WTC11 (cell line): ENCODE measurements at regions of chr6 and their contacts with region 1.

Region 1: DNA sequence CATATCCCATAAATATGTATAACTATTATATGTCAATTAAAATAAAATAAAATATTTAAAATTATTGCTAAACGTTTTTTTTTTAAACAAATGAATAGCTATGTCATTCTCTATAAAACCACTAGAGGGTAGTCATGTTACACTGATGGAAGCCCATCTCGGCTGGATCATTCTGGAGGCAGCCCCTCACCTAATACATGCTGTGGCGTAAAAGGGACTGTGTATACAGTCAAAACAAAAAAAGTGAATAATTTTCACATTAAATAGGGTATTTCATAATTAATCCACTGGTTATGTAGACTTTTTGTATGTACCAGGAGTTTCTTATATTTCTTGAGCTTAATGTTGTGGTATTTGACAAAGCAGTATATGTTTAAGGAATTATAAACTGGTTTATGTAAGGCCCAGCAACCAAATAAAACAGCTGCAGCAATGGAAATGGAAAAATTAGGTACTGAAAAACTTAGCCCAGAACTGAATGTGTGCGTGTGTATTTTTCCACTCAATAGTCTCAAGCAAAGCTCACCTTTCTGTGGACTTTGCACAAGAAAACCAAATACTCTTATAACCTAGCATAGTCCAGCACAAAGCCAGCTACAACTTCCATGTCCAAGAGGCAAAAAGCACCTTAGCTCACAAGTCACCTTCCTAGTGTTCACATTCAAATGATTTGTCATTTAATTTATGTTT is 81.7 kb downstream of the COL9A1 start:
- DNase-seq: no peak
- ATAC-seq: peak; percentile 83
- H3K4me3 Mint-ChIP-seq: no peak overlapping the region
- H3K27ac Mint-ChIP-seq: no peak overlapping the region
- H3K4me1 Mint-ChIP-seq: no peaks in the 10 kb centered on the region
- H3K27me3 Mint-ChIP-seq: no peaks in the 10 kb centered on the region
- CTCF ChIP-seq: peak; percentile 69

Region 2: DNA sequence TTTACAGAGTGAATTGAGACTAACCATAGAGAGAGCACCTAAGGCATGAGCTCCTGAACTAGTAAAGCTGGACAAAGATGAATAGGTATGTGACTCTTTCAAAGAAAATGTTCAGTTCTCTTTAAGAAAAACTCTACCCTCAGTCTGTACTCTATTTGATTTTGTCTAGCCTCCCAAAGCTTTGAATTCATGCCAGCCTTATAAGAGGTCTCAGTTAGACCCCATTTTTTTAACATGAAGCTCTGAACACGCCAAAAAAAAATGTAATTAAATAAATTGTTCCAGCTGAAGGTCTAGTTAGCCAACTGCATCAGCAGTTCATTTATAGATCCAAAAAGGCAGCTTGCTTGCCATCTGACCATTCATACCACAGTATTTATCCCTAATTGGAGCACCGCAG is 10.1 kb after region 1 on chr6:
- CTCF ChIA-PET with region 1: interaction called, 28 read pairs
- POLR2A ChIA-PET with region 1: interaction called, 3 read pairs
- DNase-seq: no peak
- ATAC-seq: no peak
- H3K4me3 Mint-ChIP-seq: no peak overlapping the region
- H3K27ac Mint-ChIP-seq: no peak overlapping the region
- H3K4me1 Mint-ChIP-seq: peaks cover 7% of the 10 kb centered on the region
- H3K27me3 Mint-ChIP-seq: no peaks in the 10 kb centered on the region
- CTCF ChIP-seq: no peak

Region 3: DNA sequence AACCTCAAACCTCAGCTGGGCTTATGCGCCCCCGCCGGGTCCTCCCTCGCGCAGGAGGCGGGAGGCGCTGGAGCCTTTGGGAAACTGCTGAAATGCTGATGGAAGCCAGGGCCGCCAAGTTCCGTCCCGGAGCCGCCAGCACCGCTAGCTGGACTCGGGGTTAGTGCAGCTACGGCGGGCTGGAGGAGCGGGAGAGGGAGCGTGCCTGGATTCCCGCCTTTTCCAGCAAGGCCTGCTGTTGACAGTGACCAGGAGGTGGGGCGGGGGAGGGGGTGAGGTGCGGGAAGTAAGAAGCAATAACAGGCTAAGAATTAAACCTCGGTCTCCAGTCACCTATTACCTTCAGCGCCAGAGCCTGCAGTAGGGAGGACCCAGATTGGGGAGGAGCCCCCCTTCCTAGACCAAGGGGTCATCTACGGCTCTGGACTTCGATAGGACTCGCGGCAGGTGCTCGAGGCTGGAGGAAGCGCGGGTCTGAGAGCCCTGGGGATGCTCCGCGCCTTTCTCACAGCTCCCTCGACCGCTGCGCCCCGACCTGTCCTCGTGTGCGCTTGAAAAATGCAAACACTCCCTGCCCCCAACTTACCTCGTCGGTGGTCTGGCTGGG is 61.2 kb after region 1 on chr6:
- CTCF ChIA-PET with region 1: interaction called, 35 read pairs
- POLR2A ChIA-PET with region 1: interaction called, 3 read pairs
- DNase-seq: peak; percentile 61
- ATAC-seq: peak; percentile 56
- H3K4me3 Mint-ChIP-seq: peak overlapping the region; percentile 78
- H3K27ac Mint-ChIP-seq: no peak overlapping the region
- H3K4me1 Mint-ChIP-seq: peaks cover 24% of the 10 kb centered on the region
- H3K27me3 Mint-ChIP-seq: peaks cover 58% of the 10 kb centered on the region
- CTCF ChIP-seq: no peak

Region 4: DNA sequence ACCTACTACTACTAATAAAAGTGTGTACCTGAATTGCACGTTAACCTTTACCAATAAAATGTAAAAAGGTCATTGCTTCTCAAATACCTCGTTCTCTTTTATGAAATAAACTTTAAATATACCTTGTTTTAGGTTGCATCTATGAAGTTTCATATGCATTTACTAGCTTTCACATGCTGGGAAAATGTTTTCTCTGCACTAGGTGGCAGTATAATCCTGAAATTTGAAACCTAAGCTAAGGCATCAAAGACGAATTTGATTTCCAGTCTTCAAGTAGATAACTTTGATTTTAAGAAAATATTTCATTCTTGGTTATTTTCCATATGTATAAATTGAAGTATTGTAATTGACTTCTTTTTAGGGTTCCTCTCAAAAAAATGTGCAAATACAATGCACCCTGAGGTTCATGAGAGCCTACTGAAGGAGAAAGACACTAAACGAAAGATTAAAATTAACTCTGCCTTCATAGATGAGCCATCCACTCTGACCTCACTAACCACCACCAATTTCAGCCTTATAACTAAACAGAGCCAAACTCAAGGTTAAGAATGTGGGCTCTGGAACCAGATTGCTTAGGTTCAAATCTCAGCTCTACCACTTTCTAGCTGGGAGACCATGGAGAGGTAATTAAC is 89.0 kb after region 1 on chr6:
- CTCF ChIA-PET with region 1: interaction called, 24 read pairs
- POLR2A ChIA-PET with region 1: no interaction called
- DNase-seq: no peak
- ATAC-seq: no peak
- H3K4me3 Mint-ChIP-seq: no peak overlapping the region
- H3K27ac Mint-ChIP-seq: no peak overlapping the region
- H3K4me1 Mint-ChIP-seq: no peaks in the 10 kb centered on the region
- H3K27me3 Mint-ChIP-seq: no peaks in the 10 kb centered on the region; the same call in 1 of the 2 replicates
- CTCF ChIP-seq: peak; percentile 62

Region 5: GRCh38 chr6:70369332-70369950 is 148.3 kb after region 1 on chr6:
- CTCF ChIA-PET with region 1: interaction called, 83 read pairs
- POLR2A ChIA-PET with region 1: no interaction called
- DNase-seq: peak; percentile 73
- ATAC-seq: peak; percentile 98
- H3K4me3 Mint-ChIP-seq: no peak overlapping the region
- H3K27ac Mint-ChIP-seq: no peak overlapping the region
- H3K4me1 Mint-ChIP-seq: no peaks in the 10 kb centered on the region
- H3K27me3 Mint-ChIP-seq: no peaks in the 10 kb centered on the region
- CTCF ChIP-seq: peak; percentile 89